AG04450 (cell line): ENCODE measurements at regions of chr10 and their contacts with region 1.

Region 1: DNA sequence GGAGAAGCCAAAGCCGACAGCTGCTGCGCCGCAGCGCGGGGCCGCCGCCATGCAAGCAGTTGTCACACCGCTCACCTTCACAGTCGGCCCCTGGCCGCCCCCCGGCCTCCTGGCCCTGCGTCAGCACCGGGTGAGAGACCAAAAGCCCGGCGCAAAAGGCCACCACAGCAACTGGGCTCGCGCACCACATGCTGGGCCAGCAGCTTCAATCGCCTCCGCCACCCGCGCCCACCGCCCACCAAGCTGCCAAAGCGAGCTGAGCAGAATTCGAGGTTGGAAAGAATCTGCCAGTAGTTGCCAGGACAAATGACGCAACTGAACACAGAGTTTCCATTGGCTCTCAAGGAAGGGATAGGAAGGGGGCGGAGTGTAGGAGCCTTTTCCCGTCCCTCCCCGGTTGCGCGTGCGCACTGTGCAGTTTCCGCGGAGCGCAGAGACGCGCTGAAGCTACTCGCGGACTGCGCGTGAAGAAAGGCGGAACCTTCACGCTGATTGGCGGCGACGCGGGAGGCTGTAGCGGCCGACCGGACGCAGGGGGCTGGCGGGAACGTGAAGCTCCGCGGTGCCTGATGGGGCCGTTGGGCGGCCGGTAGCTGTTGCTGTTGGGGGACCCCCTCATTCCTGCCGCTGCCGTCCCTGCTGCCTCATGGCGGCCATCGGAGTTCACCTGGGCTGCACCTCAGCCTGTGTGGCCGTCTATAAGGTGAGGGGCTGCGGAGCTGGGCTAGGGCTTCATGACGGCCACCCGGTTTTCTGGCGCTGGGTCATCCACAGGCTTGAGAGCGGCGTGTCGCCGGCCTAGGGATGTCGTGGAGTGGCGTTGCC is at the starts of genes CDNF, HSPA14 and MSANTD7:
- DNase-seq: peak; percentile 99
- H3K4me3 ChIP-seq: peak within 1 kb of the TSS; percentile 93
- H3K27ac ChIP-seq: peak within 1 kb of the TSS; percentile 87
- H3K27me3 ChIP-seq: no peaks in the 10 kb centered on the region
- CTCF ChIP-seq: no peak
- polyA plus RNA-seq, gene CDNF: 1.7 and 2.1 TPM in 2 replicates
- polyA plus RNA-seq, gene HSPA14: 10.1 and 14.9 TPM in 2 replicates
- polyA plus RNA-seq, gene MSANTD7: 5.2 and 5.7 TPM in 2 replicates

Region 2: GRCh38 chr10:14024329-14025202 is 813.4 kb before region 1 on chr10:
- CTCF ChIA-PET with region 1: no interaction called
- POLR2A ChIA-PET with region 1: no interaction called
- DNase-seq: no peak
- H3K4me3 ChIP-seq: no peak overlapping the region
- H3K27ac ChIP-seq: no peak overlapping the region
- H3K27me3 ChIP-seq: no peaks in the 10 kb centered on the region
- CTCF ChIP-seq: no peak

Region 3: DNA sequence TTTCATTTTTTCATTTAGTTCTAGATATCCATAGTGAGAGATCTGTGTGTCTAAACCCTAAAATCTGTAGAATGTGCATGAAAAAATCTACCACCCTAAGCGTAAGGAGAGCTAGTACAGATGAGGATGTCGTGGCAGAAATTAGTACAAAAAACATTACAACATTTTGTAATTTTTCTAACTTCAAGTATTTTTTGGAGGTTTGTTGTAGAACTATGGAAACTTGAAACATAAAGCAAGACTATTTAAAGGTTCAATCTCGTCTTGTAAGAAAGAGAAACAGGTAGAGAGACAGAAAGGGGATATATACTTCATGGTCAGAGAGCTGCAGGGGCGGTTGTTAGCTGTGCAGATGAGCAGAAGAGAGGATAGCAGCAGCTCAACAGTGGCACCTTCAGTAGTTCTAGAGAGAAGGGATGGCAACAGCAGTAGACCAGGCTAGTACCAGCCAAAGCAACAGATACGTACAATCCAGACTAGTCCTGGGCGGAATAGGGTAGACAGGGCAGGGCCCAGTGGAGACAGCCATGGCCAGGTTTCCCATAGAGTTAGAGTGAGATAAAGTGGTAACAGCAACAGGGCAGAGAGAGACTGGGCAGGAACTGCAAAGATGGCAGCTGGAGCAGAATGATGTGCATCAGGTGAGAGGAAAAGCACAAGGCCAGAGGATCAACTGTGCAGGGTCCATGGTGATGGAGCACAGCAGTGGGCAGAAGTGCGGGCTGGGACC is 652.5 kb before region 1 on chr10:
- CTCF ChIA-PET with region 1: interaction called, 3 read pairs
- POLR2A ChIA-PET with region 1: interaction called, 10 read pairs
- DNase-seq: peak; percentile 83
- H3K4me3 ChIP-seq: no peak overlapping the region
- H3K27ac ChIP-seq: peak overlapping the region; percentile 31
- H3K27me3 ChIP-seq: peaks cover 25% of the 10 kb centered on the region
- CTCF ChIP-seq: 0 out of 2 replicates have a peak, but pooled peaks have one; percentile 11

Region 4: GRCh38 chr10:14822879-14823755 is 14.9 kb before region 1 on chr10:
- CTCF ChIA-PET with region 1: interaction called, 22 read pairs
- POLR2A ChIA-PET with region 1: no interaction called
- DNase-seq: peak; percentile 20
- H3K4me3 ChIP-seq: no peak overlapping the region
- H3K27ac ChIP-seq: no peak overlapping the region
- H3K27me3 ChIP-seq: no peaks in the 10 kb centered on the region
- CTCF ChIP-seq: peak; percentile 85

Region 5: GRCh38 chr10:14878266-14879054 is 40.5 kb after region 1 on chr10 and contains the start of gene SUV39H2:
- CTCF ChIA-PET with region 1: interaction called, 4 read pairs
- POLR2A ChIA-PET with region 1: interaction called, 23 read pairs
- DNase-seq: peak; percentile 73
- H3K4me3 ChIP-seq: peak within 1 kb of the TSS; percentile 95
- H3K27ac ChIP-seq: peak within 1 kb of the TSS; percentile 94
- H3K27me3 ChIP-seq: no peaks in the 10 kb centered on the region
- CTCF ChIP-seq: no peak
- polyA plus RNA-seq, gene SUV39H2: 6.2 and 9.0 TPM in 2 replicates

Region 6: GRCh38 chr10:14904316-14904732 is 66.4 kb after region 1 on chr10:
- CTCF ChIA-PET with region 1: no interaction called
- POLR2A ChIA-PET with region 1: no interaction called
- DNase-seq: no peak
- H3K4me3 ChIP-seq: no peak overlapping the region
- H3K27ac ChIP-seq: no peak overlapping the region
- H3K27me3 ChIP-seq: no peaks in the 10 kb centered on the region
- CTCF ChIP-seq: peak; percentile 64